Left ventricle myocardium superior (tissue), 1 donor: ENCODE measurements at regions of chr2 and their contacts with region 1.

Region 1: DNA sequence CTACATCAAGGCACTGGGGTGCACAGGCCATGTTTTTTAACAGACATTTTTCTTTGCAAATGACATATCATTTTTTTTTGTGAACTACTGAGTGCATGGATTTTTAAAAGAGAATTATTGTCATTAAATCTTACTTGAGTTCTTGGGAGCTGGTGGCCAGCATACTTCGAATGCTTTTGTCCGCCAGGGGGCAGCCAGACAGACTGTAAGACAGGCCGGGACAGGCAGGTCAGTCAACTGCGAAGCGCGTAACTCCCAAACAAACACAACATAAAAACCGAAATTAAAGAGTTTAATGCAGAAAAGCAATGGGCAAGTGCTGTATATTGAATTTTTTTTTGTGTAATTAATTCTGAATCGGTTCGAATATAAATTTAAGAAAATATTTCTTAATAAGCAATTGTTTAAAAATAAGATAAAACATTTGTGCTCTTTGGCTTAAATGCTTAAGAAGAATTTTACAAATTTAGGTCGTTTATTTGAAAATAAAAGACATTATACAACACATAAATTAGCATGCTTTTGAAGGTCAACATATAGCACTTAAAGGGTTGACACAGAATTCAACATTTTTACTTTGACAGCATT is 142.2 kb upstream of the PXDN start:
- DNase-seq: peak; percentile 84
- ATAC-seq: peak; percentile 50

Region 2: DNA sequence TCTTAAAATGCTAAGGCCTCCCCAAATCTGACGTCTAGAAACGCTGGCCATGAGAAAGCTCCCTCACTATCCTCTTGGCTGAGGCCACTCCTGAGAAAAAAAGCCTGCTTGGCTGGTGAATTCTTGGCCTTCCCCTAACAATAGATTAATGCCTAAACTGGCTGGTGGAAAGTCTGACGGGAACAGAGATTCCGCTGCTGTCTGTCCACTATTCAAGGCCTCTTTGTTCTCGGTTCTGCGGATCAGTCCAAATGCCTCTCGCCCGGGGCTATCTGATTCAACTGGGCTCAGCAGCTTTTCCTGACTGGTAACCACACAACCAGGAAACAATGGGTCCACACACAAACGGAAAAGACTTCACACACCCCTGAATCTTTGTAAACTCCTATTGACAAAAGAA is 169.4 kb before region 1 on chr2:
- intact Hi-C with region 1: no loop called
- DNase-seq: no peak
- ATAC-seq: peak; percentile 41

Region 3: GRCh38 chr2:2286592-2286991 is 400.1 kb after region 1 on chr2:
- intact Hi-C with region 1: loop called (anchors 10 kb)
- DNase-seq: no peak
- ATAC-seq: no peak

Region 4: DNA sequence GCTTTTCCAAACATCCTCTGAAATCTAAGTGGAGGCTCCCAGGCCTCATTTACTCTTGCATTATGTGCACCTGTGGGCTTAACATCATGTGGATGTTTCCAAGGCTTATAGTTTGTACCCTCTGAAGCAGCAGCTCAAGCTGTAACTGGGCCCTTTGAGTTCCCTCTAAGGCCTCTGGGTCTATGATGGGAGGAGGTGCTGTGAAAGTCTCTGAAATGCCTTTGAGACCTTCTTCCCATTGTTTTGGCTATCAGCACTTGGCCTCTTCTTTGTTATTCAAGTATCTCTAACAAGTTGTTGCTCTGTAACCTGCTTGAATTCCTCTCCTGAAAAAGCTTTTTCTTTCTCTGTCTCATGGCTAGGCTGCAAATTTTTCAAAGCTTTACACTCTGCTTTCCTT is 502.7 kb after region 1 on chr2:
- intact Hi-C with region 1: no loop called
- DNase-seq: no peak
- ATAC-seq: no peak

Region 5: DNA sequence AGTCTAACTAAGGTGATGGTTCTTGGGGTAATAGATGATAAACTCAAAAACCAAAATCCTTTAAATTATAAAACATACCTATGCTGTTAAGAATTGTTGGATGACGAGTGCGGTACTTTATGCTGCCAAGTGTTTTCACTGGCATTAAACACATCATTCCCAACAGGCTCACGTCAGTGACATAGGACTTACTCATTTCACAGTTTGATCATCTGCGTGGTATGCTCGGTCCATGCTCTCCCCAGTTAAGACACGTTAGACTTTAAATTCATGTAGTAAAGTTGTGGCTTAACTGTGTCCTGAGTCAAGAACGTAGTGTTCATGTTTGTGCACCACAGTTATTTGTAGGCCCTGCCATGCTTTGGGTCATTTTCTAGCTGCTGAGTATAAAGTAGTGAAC is 570.2 kb after region 1 on chr2:
- intact Hi-C with region 1: no loop called
- DNase-seq: no peak
- ATAC-seq: no peak